Sciatic nerve (tissue), 2 donors: ENCODE measurements at regions of chr16 and their contacts with region 1.

Region 1: DNA sequence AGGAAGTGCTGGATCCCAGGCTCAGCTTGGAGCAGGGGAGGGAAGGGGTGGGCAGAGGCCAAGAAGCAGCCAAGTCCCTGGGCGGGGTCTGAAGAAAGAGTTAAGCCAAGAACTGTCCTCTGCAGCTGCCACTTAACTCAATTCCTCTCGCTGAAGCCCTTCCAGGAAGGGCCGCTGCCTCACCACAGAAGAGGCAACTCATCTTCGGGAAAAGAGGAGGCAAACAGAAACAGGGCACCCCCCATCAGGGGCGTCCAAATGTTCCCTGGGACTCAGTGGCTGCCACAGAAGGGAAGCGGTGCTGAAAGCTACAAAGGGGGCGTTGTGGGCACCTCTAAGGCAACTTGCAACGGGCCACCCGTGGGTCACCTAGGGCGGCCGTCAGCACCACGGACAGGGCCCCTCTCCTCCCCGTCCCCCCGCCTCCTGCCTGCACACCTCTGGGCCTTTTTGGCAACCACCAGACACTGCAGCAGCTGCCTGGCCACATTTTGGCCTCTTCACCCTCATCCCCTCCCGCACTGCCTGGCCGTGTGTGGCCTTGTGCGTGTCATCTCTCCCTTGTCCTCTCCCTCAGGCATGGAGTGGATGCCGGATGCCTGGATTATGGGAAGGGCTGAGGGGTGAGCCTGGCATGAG is 2.5 kb downstream of the TLCD3B start:
- DNase-seq: no peak
- ATAC-seq: peak; percentile 43

Region 2: DNA sequence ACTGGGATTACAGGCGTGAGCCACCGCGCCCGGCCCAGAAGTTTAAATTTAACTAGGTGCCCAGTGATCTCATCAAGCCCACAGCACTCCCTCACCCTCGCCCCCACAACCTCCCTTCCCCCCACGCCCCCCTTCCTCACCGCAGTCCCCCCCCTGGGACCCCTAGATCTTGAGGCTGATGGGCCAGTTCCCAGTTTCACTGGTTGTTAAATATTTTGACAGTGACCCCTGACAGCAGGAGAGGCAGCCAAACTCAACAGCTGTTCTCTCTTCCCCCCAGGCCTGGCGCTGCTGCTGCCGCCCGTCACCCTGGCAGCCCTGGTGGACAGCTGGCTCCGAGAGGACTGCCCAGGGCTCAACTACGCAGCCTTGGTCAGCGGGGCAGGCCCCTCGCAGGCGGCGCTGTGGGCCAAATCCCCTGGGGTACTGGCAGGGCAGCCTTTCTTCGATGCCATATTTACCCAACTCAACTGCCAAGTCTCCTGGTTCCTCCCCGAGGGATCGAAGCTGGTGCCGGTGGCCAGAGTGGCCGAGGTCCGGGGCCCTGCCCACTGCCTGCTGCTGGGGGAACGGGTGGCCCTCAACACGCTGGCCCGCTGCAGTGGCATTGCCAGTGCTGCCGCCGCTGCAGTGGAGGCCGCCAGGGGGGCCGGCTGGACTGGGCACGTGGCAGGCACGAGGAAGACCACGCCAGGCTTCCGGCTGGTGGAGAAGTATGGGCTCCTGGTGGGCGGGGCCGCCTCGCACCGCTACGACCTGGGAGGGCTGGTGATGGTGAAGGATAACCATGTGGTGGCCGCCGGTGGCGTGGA is 334.0 kb before region 1 on chr16:
- intact Hi-C with region 1: loop called (anchors 10 kb)
- DNase-seq: no peak
- ATAC-seq: no peak

Region 3: DNA sequence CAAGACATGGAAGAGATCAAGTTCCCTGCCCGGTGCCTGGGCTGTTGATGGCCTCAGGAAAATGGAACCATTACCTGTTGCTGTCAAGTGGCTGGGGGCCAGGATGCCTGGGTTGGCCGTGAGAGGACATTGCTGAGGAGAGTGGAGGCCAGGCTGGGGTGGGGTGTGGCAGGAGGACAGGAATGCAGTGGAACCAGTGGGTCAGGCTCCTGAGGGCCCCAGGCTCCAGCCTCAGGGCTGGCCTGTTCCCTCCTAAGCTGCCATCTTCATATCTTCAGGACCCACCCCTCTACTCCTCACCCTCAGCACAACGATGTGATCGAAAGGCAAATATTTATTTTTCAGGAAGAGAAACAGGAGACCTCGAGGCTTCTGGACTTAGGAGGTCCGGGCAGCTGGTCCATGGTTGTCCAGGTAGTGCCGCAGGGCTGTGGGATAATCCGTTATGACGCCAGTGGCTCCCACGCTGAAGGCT is 76.0 kb after region 1 on chr16:
- intact Hi-C with region 1: no loop called
- DNase-seq: no peak
- ATAC-seq: no peak

Region 4: DNA sequence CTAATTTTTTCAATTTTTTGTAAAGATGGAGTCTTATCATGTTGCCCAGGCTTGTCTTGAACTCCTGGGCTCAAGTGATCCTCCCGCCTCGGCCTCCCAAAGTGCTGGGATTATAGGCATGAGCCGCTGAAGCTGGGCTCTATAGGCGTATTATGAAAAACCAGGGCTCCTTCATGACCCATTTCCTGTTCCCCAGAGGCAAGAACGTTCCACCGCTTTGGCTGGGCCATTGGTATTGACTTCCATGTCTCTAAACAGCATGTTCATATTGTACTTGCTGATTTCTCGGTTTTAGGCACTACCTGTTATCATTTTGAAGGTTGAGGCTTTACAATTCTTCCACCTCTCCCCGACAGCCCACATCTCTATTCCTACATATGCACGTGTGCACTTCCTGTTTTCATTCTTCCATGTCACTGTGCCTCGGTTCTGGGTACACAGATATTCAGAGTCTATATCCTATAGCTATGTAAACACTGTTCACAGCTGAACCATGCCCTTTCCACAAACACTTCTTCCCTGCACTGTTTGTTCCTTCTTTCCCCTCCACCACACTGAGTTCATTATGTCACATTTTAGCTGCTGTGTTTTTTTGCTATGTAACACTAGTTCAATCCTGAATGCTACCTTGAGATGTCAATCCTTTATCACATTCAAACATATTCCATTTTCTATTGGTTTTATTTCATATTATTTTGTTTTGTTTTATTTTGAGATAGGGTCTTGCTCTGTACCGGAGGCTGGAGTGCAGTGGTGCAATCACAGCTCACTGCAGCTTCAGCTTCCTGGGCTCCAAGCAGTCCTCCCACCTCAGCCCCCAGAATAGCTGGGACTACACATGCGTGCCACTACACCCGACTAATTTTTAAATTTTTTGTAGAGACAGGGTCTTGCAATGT is 111.3 kb after region 1 on chr16:
- intact Hi-C with region 1: no loop called
- DNase-seq: no peak
- ATAC-seq: no peak